ENCODE measurements at regions of chr5 and their contacts with region 1.

Region 1: GRCh38 chr5:96344678-96345577 is 88.1 kb downstream of the PCSK1 start:
- DNase-seq: no peak
- H3K4me3 ChIP-seq: no peak overlapping the region
- H3K27ac ChIP-seq: no peak overlapping the region
- H3K4me1 ChIP-seq: peaks cover 0 to 14% (median 2%) of the 10 kb centered on the region in 6 donors
- H3K27me3 ChIP-seq: peaks cover 0 to 3% (median 0%) of the 10 kb centered on the region in 7 donors
- CTCF ChIP-seq: peak in 10 of 11 experiments; percentile 15 to 63 (median 46)
- POLR2A ChIP-seq: no peak

Region 2: GRCh38 chr5:96601811-96602244 is 256.9 kb after region 1 on chr5:
- intact Hi-C with region 1: loop called (anchors 5 kb)
- DNase-seq: no peak
- H3K4me3 ChIP-seq: peak overlapping the region in 1 of 8 donors; percentile 14
- H3K27ac ChIP-seq: no peak overlapping the region
- H3K4me1 ChIP-seq: peaks cover 0 to 6% (median 0%) of the 10 kb centered on the region in 6 donors
- H3K27me3 ChIP-seq: peaks cover 0 to 10% (median 0%) of the 10 kb centered on the region in 7 donors
- CTCF ChIP-seq: peak; percentile 55 to 89 (median 81)
- POLR2A ChIP-seq: no peak